PC-9 (cell line): ENCODE measurements at regions of chr6 and their contacts with region 1.

Region 1: DNA sequence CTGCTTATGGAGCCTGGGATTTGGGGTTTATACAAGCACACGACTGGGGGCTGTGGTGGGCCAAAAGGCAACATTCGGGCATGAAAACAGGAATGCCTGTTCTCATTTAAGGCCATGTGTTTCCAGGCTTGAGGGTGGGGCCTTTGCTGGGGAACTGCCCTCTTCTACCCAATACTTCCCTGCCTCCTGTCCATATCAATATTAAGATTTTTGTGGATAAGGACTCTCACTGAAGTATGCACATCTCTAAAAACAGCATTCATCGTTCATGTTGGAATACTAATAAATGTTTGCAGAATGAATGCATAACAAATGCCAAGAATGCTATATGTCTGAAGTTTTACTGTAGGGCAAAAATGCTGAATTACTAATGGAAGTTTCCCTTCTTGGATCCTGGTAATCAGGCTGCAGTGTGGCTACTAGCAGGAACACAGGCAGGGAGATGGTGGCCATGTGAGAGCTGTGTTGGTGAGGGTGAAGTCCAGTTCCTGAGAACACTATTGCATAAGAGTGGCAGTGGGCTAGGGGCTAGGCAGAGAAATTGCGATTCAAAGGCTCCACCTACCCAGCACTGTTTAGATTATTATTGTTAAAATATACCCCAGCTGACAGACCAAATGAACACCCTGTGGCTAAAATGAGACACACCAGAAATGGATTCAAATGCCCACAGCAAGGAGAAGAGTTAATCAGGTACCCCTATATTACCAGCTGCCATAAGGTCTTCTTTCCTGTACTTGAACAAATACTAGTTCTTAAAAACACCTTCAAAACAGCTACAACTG is 644.3 kb downstream of the EPM2A start:
- DNase-seq: no peak
- H3K4me3 ChIP-seq: no peak overlapping the region
- H3K27ac ChIP-seq: no peak overlapping the region
- H3K4me1 ChIP-seq: no peaks in the 10 kb centered on the region
- H3K27me3 ChIP-seq: no peaks in the 10 kb centered on the region
- CTCF ChIP-seq: no peak

Region 2: GRCh38 chr6:145074805-145075397 is 16.1 kb before region 1 on chr6:
- CTCF ChIA-PET with region 1: interaction called, 14 read pairs
- POLR2A ChIA-PET with region 1: no interaction called
- intact Hi-C with region 1: no loop called
- DNase-seq: no peak
- H3K4me3 ChIP-seq: no peak overlapping the region
- H3K27ac ChIP-seq: no peak overlapping the region
- H3K4me1 ChIP-seq: no peaks in the 10 kb centered on the region
- H3K27me3 ChIP-seq: no peaks in the 10 kb centered on the region
- CTCF ChIP-seq: no peak

Region 3: DNA sequence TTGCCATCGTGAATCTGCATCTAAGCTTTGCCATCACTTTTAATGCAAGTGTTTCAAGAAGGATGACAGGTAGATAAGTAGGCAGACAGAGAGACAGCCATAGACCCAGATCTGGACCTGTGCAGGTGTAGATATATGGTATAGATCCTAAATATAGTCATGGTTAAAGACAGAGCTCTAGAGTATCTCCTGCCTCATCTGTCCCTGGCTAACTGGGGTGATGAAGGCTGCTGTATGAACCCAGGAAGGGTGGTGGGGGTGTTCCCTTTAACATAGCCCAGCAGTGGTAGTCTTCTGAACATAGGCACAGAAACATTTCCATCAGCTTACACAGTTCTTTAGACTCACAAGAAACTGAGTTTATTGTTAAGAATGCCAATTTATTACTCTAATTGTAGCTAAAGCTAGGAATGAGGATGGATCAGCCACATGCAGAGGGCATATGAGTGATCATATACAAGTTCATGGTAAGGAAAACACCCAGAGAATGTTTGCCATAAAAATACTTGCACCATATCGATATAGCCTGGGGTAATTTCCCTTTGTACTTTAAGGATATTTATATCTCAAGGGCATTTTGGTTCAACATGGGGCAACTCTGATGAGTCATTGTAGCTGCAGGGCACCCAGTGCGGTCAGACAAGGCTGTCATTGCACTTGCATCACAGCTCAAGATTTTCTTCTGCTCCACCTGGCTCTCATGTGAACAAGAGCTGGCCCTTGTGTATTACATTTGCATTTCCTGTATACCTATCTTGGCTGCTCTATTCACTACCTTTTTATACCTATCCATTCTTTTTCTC is 57.2 kb after region 1 on chr6:
- CTCF ChIA-PET with region 1: no interaction called
- POLR2A ChIA-PET with region 1: no interaction called
- intact Hi-C with region 1: no loop called
- DNase-seq: peak; percentile 83 to 92
- H3K4me3 ChIP-seq: no peak overlapping the region
- H3K27ac ChIP-seq: peak overlapping the region; percentile 56
- H3K4me1 ChIP-seq: peaks cover 23% of the 10 kb centered on the region
- H3K27me3 ChIP-seq: no peaks in the 10 kb centered on the region
- CTCF ChIP-seq: no peak